ENCODE measurements at regions of chr2 and their contacts with region 1.

Region 1: DNA sequence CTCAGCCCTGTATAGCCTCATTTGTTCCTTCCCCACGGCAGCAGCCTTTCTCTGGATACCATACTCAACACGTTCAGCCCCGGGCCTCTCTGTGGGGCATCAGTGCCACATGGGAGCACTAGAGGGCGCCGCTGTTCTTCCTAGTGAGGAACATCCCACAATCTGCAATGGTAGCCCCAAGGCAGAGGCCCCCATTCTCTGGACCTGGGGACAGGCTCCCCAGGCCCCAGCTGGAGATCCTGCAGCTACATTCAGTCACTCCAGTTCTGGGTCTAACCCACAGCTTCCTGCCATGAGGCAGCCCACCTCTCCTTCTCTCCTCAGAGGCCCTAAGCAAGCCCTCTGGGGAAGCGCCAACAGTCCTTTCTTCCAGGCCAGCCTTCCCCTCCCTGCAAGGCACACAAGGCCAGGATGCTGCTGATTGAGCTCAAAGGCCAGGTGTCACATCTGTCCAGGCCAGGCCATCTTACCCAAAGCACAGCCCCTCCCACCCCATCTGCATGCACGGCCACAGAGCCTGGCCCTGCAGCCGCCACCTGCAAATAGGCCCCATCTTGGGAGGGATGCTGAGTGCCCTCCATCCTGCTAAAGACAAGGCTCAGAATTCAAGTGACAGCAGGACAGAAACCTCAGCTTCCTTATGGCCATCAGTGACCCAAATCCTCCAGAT is 14.3 kb upstream of the SFXN5 start:
- DNase-seq: peak; percentile 88
- H3K4me3 ChIP-seq: no peak overlapping the region
- H3K27ac ChIP-seq: no peak overlapping the region
- H3K4me1 ChIP-seq: no peaks in the 10 kb centered on the region
- H3K27me3 ChIP-seq: no peaks in the 10 kb centered on the region
- CTCF ChIP-seq: peak; percentile 96

Region 2: GRCh38 chr2:73163483-73164367 is 77.9 kb after region 1 on chr2:
- intact Hi-C with region 1: loop called (anchors 2 kb)
- DNase-seq: peak; percentile 62
- H3K4me3 ChIP-seq: no peak overlapping the region
- H3K27ac ChIP-seq: no peak overlapping the region
- H3K4me1 ChIP-seq: no peaks in the 10 kb centered on the region
- H3K27me3 ChIP-seq: no peaks in the 10 kb centered on the region
- CTCF ChIP-seq: peak; percentile 85